Lower leg skin (tissue), 4 donors: ENCODE measurements at regions of chr10 and their contacts with region 1.

Region 1: GRCh38 chr10:69994262-69994661 is 58.4 kb upstream of the MACROH2A2 start:
- DNase-seq: peak in 1 of 2 donors; percentile 18
- H3K4me3 ChIP-seq: no peak overlapping the region
- CTCF ChIP-seq: no peak
- POLR2A ChIP-seq: no peak

Region 2: DNA sequence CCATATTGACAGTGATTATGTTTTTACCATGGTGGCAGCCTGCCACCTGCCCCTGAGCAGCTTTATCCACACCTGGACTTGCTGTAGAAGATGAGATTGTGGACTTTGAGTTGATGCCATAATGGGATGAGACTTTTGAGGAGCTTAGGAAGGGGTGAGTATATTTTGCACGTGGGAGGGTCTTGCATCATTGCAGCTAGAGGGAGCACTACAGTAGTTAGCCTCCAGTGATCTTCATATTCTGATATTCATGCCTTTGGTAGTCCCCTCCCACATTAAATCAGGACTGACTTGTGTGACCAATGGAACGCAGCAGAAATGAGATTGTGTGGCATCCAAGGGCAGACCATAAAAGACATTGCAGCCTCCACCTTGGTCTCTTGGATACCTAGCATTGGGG is 210.7 kb before region 1 on chr10:
- intact Hi-C with region 1: no loop called
- DNase-seq: no peak
- H3K4me3 ChIP-seq: no peak overlapping the region
- CTCF ChIP-seq: no peak
- POLR2A ChIP-seq: no peak

Region 3: DNA sequence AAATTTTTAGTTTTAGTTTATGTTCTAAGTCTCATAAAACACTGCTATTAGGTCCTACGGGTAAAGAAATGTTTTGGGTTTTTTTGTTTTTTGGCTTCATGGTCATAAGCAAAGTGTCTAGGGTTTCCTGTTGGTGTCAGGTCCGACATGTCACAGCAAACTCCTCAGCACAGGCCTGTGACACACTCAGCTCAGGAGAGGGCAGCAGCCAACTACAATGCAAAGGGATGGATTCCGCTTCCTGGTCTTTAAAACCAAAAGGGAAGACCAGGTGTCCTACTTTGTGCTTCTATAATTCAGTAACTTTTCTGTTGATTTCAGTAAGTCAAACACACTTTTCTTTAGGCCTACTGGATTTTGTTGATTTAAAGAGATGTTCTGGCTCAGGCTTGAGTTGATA is 25.4 kb before region 1 on chr10:
- intact Hi-C with region 1: loop called (anchors 1 kb)
- DNase-seq: no peak
- H3K4me3 ChIP-seq: no peak overlapping the region
- CTCF ChIP-seq: no peak
- POLR2A ChIP-seq: no peak

Region 4: DNA sequence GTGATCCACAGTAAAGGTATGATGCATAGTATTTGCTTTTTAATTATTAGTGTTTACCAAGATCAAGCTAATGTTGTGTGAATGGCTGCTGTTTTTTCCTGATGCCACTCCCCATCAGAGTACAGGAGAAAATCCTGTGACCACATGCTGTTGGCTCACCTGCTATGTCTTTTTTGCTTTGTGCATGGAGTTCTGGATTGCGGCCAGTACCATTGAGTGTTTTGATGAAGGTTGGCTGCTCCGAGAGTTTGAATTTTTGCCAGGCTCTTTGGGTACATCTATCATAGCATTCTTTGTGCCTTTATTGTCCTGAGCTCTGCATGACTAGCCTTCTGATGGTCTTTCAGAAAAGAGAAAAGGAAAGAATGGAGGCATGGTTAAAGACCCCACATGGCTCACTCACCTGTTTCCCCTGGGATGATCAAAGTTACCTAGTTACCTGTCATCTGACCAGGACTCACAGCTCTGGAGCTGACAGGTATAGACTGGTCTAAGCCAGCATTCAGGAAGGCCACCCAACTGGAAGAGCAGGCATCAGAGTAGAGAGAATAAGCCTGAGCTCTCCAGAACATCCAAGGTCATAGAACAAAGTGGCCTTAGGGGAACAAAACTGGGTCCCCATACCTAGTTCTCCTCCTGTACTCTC is 809.6 kb after region 1 on chr10:
- intact Hi-C with region 1: no loop called
- DNase-seq: peak in 1 of 2 donors; percentile 59
- H3K4me3 ChIP-seq: no peak overlapping the region
- CTCF ChIP-seq: no peak
- POLR2A ChIP-seq: no peak